Gastrocnemius medialis (tissue), 4 donors: ENCODE measurements at regions of chr2 and their contacts with region 1.

Region 1: GRCh38 chr2:65129826-65130663 is at the start of gene RAB1A:
- DNase-seq: peak; percentile 100
- ATAC-seq: peak; percentile 83 to 86
- H3K4me3 ChIP-seq: peak within 1 kb of the TSS; percentile 80 to 100 (median 88)
- H3K27ac ChIP-seq: peak within 1 kb of the TSS; percentile 97 to 100 (median 98)
- H3K4me1 ChIP-seq: peaks cover 38 to 40% of the 10 kb centered on the region in 2 donors
- H3K27me3 ChIP-seq: no peaks in the 10 kb centered on the region
- CTCF ChIP-seq: peak in 3 of 5 experiments; percentile 49 to 68 (median 63)
- POLR2A ChIP-seq: peak; percentile 95 to 96
- total RNA-seq, gene RAB1A: 36.4 to 71.3 (median 43.7) TPM

Region 2: DNA sequence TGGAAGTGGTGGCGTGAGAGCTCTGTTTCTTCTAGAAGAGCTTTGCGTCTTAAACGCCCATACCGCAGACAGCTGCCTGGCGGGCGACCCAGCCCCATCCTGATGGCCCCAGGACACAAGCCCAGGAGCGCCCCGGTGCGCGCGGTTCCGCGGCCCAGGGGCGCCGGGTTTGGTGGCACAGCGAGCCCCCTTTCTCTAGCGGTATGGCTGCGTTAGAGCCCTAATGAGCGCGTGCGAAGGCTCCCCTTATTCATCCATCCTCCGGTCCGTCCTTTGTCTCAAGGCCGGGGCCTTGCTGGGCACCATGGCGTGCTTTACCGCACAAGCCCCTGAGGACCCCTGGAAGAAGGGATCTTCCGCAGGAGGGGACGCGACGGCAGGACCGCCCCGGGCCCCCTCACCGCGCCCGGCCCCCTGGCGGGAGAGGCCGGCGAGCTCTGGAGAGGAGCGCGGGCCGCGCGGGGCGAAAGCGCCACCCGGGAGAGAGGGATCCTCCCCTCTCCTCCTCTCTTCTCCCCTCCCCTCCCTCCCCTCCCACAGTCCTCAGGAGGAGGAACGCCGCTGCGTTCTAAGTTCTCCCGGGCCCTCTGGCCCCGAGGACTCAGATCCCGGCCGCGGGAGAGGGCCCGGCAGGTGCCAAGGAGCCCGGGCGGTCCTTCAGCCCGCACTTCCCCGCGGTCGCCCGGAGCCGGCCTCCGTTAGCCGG is 141.5 kb before region 1 on chr2:
- in situ Hi-C with region 1: no loop called
- intact Hi-C with region 1: loop called (anchors 2 kb)
- DNase-seq: peak; percentile 70 to 82
- ATAC-seq: peak; percentile 60 to 77
- H3K4me3 ChIP-seq: peak overlapping the region; percentile 73 to 99 (median 92)
- H3K27ac ChIP-seq: peak overlapping the region; percentile 89 to 97 (median 96)
- H3K4me1 ChIP-seq: peaks cover 49 to 52% of the 10 kb centered on the region in 2 donors
- H3K27me3 ChIP-seq: no peaks in the 10 kb centered on the region
- CTCF ChIP-seq: peak; percentile 40 to 62 (median 55)
- POLR2A ChIP-seq: peak; percentile 62 to 69

Region 3: DNA sequence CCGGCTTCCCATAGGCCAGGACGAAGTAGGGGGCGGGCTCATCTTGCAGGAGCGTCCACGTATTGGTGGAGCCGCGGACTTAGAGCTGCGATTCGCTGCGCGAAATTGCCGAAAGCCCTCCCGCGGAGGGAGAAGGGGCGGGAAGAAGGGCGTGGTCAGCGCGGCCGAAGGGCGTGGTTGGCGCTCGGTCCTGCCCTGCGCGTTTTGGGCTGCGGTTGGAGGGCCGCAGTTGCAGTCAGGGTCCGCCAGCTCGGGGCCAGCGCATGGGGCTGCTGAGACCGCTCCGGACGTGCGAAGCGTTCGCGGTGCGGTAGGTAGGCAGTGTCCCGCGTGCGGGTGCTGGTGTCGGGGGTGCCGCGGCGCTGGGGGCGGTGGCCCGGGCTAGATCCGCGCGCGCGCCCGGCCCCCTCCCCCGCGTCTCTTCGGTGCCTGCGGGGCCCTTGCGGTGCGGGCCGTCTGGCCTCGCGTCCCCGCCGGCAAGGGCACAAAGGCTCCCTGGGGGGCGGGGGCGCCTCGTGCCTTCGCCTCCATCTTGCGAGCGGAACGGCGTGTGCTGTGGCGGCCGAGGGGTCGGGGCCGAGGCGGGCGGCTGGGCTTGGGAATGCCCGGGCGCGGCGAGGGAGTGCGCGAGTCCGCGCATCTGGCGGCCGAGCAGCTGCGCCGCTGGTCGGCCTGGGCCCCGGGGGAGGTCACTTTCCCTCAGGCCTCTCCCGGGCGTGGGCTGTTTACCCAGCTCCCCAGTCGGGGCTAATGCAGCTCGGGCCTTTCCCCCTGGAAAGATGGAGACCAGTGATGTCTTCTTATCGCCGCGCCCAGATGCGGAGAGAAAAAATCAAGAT is 73.6 kb before region 1 on chr2 and contains the start of gene CEP68:
- in situ Hi-C with region 1: loop called in 2 of 4 experiments (anchors 5 to 10 kb)
- intact Hi-C with region 1: loop called (anchors 1 kb)
- DNase-seq: peak; percentile 98
- ATAC-seq: peak; percentile 93
- H3K4me3 ChIP-seq: peak within 1 kb of the TSS; percentile 70 to 90 (median 86)
- H3K27ac ChIP-seq: peak within 1 kb of the TSS; percentile 90 to 96 (median 92)
- H3K4me1 ChIP-seq: peaks cover 48 to 50% of the 10 kb centered on the region in 2 donors
- H3K27me3 ChIP-seq: no peaks in the 10 kb centered on the region
- CTCF ChIP-seq: peak in 3 of 5 experiments; percentile 9 to 26 (median 19)
- POLR2A ChIP-seq: peak; percentile 96 to 99
- total RNA-seq, gene CEP68: 21.4 to 48.0 (median 35.2) TPM

Region 4: DNA sequence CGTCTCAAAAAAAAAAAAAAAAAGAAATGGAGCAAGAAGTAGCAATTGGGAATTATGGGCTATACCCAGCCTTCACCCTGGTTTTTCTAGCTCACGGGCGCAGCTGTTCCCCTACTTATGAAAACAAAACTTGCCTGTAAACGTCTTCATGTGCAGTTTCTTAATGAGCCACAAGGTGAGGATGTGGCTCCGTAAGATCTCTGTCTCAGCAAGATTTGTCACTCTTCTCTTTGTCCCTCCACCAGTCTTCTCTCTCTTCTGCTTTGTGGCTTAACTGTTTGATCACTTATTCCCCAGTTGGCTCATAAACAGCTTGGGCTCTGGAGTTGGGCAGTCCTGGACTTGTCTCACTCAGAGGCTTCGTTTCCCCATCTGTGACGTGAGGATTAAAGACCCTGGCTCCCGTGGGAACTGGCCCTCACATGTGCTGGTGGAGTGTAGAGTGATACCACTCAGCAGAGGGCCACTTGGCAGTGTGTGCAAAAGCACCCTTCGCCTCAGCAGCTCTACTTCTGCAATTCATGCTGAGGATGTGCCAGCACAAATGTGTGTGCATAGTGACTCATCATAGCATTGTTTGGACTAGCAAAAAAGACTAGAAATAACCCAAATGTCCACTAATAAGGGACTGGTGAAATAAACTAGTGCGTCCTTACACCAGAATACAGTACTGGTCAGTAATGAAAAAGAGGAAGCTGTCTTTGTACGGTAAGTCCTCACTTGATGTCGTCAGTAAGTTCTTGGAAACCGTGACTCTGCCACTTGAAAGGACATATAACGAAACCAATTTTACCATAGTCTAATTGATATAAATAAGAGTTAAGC is 65.1 kb before region 1 on chr2:
- in situ Hi-C with region 1: loop called in 3 of 4 experiments (anchors 5 to 10 kb)
- intact Hi-C with region 1: loop called (anchors 1 kb)
- DNase-seq: peak; percentile 50 to 78
- ATAC-seq: peak; percentile 60 to 73
- H3K4me3 ChIP-seq: peak overlapping the region in 3 of 4 donors; percentile 3 to 34 (median 23)
- H3K27ac ChIP-seq: peak overlapping the region; percentile 90 to 96 (median 92)
- H3K4me1 ChIP-seq: peaks cover 93 to 95% of the 10 kb centered on the region in 2 donors
- H3K27me3 ChIP-seq: no peaks in the 10 kb centered on the region
- CTCF ChIP-seq: peak; percentile 76 to 90 (median 83)
- POLR2A ChIP-seq: peak; percentile 10 to 56

Region 5: GRCh38 chr2:65070172-65070830 is 59.7 kb before region 1 on chr2:
- in situ Hi-C with region 1: loop called in 2 of 4 experiments (anchors 10 kb)
- intact Hi-C with region 1: loop called (anchors 1 kb)
- DNase-seq: peak; percentile 52 to 69
- ATAC-seq: peak; percentile 63 to 71
- H3K4me3 ChIP-seq: no peak overlapping the region
- H3K27ac ChIP-seq: peak overlapping the region; percentile 78 to 90 (median 87)
- H3K4me1 ChIP-seq: peaks cover 81 to 83% of the 10 kb centered on the region in 2 donors
- H3K27me3 ChIP-seq: no peaks in the 10 kb centered on the region
- CTCF ChIP-seq: peak in 3 of 5 experiments; percentile 21 to 52 (median 42)
- POLR2A ChIP-seq: peak in 1 of 2 donors; percentile 40

Region 6: DNA sequence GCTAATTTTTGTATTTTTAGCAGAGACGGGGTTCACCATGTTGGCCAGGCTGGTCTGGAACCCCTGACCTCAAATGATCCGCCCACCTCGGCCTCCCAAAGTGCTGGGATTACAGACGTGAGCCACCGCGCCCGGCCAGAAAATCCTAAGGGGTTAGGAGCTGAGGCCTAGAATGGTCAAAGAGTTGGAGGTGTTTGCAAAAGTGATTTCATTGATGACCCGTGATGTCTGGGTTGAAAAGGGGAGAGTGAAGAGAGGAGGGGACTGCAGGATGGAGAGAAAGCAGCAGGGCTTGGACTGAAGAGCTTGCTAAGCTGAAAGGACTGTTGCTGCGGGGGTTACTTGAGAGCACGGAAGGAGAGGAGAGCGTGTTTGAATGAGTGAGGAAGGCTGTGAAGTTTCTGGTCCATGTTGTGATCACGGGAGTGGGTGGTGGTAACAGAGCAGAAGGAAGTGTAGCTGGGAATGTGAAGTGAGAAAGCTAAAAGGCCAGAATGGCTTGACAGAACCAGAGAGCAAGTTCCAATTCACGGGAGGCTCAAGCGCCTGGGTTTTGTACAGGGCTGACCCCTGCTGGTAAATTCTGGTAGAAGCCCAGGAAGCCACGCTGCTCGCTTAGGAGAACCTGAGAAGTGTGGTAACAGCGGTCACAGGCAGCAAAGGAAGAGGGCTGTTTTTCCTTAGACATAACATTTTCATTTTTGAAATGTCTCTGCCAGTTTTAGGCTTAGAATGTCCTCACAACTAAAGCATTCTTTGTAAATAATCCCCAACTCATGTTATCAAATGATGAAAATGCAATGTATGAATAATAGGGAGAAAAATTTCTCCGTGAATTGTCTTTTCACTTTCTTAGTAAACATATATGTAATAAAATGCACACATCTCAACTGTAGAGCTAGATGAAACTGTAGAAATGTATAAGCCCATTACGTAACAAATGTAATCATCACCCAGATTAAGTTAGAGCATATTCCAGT is 57.1 kb after region 1 on chr2:
- in situ Hi-C with region 1: no loop called
- intact Hi-C with region 1: loop called (anchors 5 kb)
- DNase-seq: peak; percentile 53 to 77
- ATAC-seq: peak; percentile 98 to 99
- H3K4me3 ChIP-seq: no peak overlapping the region
- H3K27ac ChIP-seq: no peak overlapping the region
- H3K4me1 ChIP-seq: peaks cover 3 to 7% of the 10 kb centered on the region in 2 donors
- H3K27me3 ChIP-seq: no peaks in the 10 kb centered on the region
- CTCF ChIP-seq: peak; percentile 41 to 85 (median 76)
- POLR2A ChIP-seq: no peak

Region 7: GRCh38 chr2:65227425-65228262 is 97.6 kb after region 1 on chr2 and contains the start of gene ACTR2:
- in situ Hi-C with region 1: no loop called
- intact Hi-C with region 1: loop called (anchors 2 kb)
- DNase-seq: peak; percentile 94 to 96
- ATAC-seq: peak; percentile 92 to 94
- H3K4me3 ChIP-seq: peak within 1 kb of the TSS; percentile 87 to 95 (median 92)
- H3K27ac ChIP-seq: peak within 1 kb of the TSS; percentile 92 to 99 (median 98)
- H3K4me1 ChIP-seq: peaks cover 24 to 26% of the 10 kb centered on the region in 2 donors
- H3K27me3 ChIP-seq: no peaks in the 10 kb centered on the region
- CTCF ChIP-seq: no peak
- POLR2A ChIP-seq: peak; percentile 87 to 90
- total RNA-seq, gene ACTR2: 34.4 to 43.9 (median 35.8) TPM